Right ventricle myocardium inferior (tissue), 1 donor: ENCODE measurements at regions of chr13 and their contacts with region 1.

Region 1: GRCh38 chr13:98384739-98385138 is 192.2 kb downstream of the STK24 start:
- DNase-seq: no peak
- ATAC-seq: no peak

Region 2: GRCh38 chr13:98349731-98350305 is 34.9 kb before region 1 on chr13:
- intact Hi-C with region 1: loop called (anchors 2 kb)
- DNase-seq: no peak
- ATAC-seq: no peak